PC-3 (cell line): ENCODE measurements at regions of chrX and their contacts with region 1.

Region 1: DNA sequence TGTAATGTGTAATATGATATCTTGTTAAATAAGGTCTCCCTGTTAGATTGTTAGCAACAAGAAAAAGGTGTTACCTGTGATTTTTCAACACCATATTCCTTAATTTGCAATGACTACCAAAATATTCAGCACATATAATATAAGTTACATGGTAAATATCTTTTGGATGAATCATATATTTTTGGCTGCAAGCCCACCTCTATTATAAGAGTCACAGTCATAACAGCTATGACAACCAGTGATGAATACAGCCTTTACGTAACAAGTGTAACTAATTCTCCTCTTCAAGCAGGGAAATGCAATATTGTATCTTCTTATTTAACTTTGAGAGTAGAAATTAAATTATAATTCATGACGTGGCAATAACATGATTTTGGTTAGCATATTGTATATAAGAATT is 187.0 kb downstream of the NLGN4X start:
- DNase-seq: peak; percentile 65
- ATAC-seq: no peak
- H3K4me3 ChIP-seq: no peak overlapping the region
- H3K27ac ChIP-seq: no peak overlapping the region
- H3K4me1 ChIP-seq: no peaks in the 10 kb centered on the region
- H3K27me3 ChIP-seq: no peaks in the 10 kb centered on the region
- CTCF ChIP-seq: no peak

Region 2: GRCh38 chrX:6026980-6027379 is 14.7 kb before region 1 on chrX:
- CTCF ChIA-PET with region 1: no interaction called
- POLR2A ChIA-PET with region 1: interaction called, 18 read pairs
- intact Hi-C with region 1: no loop called
- DNase-seq: no peak
- ATAC-seq: no peak
- H3K4me3 ChIP-seq: no peak overlapping the region
- H3K27ac ChIP-seq: no peak overlapping the region
- H3K4me1 ChIP-seq: no peaks in the 10 kb centered on the region
- H3K27me3 ChIP-seq: no peaks in the 10 kb centered on the region
- CTCF ChIP-seq: no peak